ENCODE measurements at regions of chr2 and their contacts with region 1.

Region 1: DNA sequence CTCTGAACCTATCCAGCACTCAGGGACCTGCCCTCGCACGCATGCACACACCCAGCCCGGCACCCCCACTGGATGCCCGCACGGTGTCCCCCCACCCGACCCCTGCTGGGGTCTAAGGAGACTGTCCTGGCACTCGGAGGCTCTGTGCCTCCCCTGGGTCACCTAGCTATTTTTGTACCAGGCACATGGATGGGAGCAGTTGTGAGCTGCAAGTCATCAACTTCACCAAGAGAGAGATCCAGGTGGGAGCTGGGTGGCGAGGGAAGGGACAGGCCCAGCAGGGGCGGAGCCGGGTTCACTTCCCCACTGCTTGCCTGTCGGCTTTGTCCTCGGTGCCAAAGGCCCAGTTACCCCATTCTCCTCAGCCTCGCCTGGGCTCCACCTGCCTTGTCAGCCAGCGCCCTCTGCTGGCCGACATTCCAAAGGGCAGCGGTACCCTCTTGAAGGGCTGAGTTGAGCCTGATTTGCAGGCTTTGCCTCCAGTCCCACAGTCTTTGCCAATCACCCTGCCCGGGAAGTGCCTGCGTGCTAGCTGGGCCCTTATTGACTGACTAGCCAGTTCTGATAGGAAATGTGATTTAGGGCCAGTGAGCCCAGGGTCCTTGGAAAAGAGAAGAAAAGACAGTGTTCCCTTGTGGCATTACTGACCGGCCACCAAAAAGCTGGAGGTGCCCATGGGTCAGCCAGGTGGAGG is 5.8 kb downstream of the NT5DC4 start:
- DNase-seq: peak; percentile 93 to 95
- H3K4me3 ChIP-seq: peak overlapping the region; percentile 0; the same call in 1 of the 2 replicates
- H3K4me3 Mint-ChIP-seq: peak overlapping the region; percentile 58
- H3K27ac Mint-ChIP-seq: peak overlapping the region; percentile 67
- H3K4me1 ChIP-seq: peaks cover 21% of the 10 kb centered on the region
- H3K4me1 Mint-ChIP-seq: peaks cover 10% of the 10 kb centered on the region
- H3K27me3 ChIP-seq: no peaks in the 10 kb centered on the region
- H3K27me3 Mint-ChIP-seq: no peaks in the 10 kb centered on the region
- CTCF ChIP-seq: peak; percentile 96 to 97

Region 2: DNA sequence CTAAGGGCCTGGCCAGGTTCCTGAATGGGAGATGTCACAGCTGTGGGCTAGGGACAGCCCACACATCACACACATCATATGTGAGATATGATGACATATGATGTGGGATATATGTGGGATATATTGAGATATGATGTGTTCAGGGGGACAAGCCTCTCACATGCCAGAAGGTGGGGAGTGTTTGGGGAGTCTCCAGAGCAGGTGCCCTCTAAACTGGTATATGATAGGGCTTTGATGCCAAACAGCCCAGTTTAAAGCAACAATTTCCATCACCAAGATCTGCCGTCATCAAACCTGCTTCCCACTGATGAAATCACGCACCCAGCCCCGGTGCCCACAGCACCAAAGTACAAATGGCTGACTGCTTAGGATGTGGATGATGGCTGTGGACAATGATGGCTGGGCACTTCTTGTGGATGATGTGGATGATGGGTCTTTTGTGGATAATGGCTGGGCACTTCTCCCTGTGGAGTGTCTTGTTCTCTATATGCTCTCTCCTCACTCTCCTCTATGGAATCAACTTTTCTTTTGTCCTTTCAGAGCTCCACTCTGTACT is 537.6 kb before region 1 on chr2:
- CTCF ChIA-PET with region 1: no interaction called
- POLR2A ChIA-PET with region 1: no interaction called
- intact Hi-C with region 1: no loop called
- DNase-seq: no peak
- H3K4me3 ChIP-seq: no peak overlapping the region
- H3K4me3 Mint-ChIP-seq: no peak overlapping the region
- H3K27ac Mint-ChIP-seq: no peak overlapping the region
- H3K4me1 ChIP-seq: no peaks in the 10 kb centered on the region
- H3K4me1 Mint-ChIP-seq: no peaks in the 10 kb centered on the region
- H3K27me3 ChIP-seq: no peaks in the 10 kb centered on the region
- H3K27me3 Mint-ChIP-seq: peaks cover 2% of the 10 kb centered on the region
- CTCF ChIP-seq: no peak

Region 3: GRCh38 chr2:112542123-112542983 is 184.3 kb before region 1 on chr2 and contains the start of gene POLR1B:
- CTCF ChIA-PET with region 1: no interaction called
- POLR2A ChIA-PET with region 1: no interaction called
- intact Hi-C with region 1: loop called (anchors 1 kb)
- DNase-seq: peak; percentile 92 to 93
- H3K4me3 ChIP-seq: peak within 1 kb of the TSS; percentile 89
- H3K4me3 Mint-ChIP-seq: no peak within 1 kb of the TSS
- H3K27ac Mint-ChIP-seq: no peak within 1 kb of the TSS
- H3K4me1 ChIP-seq: peaks cover 10% of the 10 kb centered on the region; the same call in 1 of the 2 replicates
- H3K4me1 Mint-ChIP-seq: no peaks in the 10 kb centered on the region
- H3K27me3 ChIP-seq: no peaks in the 10 kb centered on the region
- H3K27me3 Mint-ChIP-seq: no peaks in the 10 kb centered on the region
- CTCF ChIP-seq: peak in 1 of 2 experiments; percentile 24
- total RNA-seq, gene POLR1B: 38.3 and 42.2 TPM in 2 replicates

Region 4: GRCh38 chr2:112591378-112591777 is 135.3 kb before region 1 on chr2:
- CTCF ChIA-PET with region 1: interaction called, 10 read pairs
- POLR2A ChIA-PET with region 1: interaction called, 9 read pairs
- intact Hi-C with region 1: no loop called
- DNase-seq: peak; percentile 91 to 96
- H3K4me3 ChIP-seq: no peak overlapping the region
- H3K4me3 Mint-ChIP-seq: peak overlapping the region; percentile 49
- H3K27ac Mint-ChIP-seq: peak overlapping the region; percentile 78
- H3K4me1 ChIP-seq: peaks cover 28% of the 10 kb centered on the region
- H3K4me1 Mint-ChIP-seq: peaks cover 37% of the 10 kb centered on the region
- H3K27me3 ChIP-seq: no peaks in the 10 kb centered on the region
- H3K27me3 Mint-ChIP-seq: no peaks in the 10 kb centered on the region
- CTCF ChIP-seq: no peak

Region 5: GRCh38 chr2:112618383-112618782 is 108.3 kb before region 1 on chr2:
- CTCF ChIA-PET with region 1: interaction called, 11 read pairs
- POLR2A ChIA-PET with region 1: no interaction called
- intact Hi-C with region 1: no loop called
- DNase-seq: no peak
- H3K4me3 ChIP-seq: no peak overlapping the region
- H3K4me3 Mint-ChIP-seq: no peak overlapping the region
- H3K27ac Mint-ChIP-seq: no peak overlapping the region
- H3K4me1 ChIP-seq: peaks cover 6% of the 10 kb centered on the region
- H3K4me1 Mint-ChIP-seq: peaks cover 7% of the 10 kb centered on the region
- H3K27me3 ChIP-seq: no peaks in the 10 kb centered on the region
- H3K27me3 Mint-ChIP-seq: no peaks in the 10 kb centered on the region
- CTCF ChIP-seq: no peak

Region 6: GRCh38 chr2:112645310-112646101 is 81.1 kb before region 1 on chr2 and contains the start of gene SLC20A1:
- CTCF ChIA-PET with region 1: interaction called, 26 read pairs
- POLR2A ChIA-PET with region 1: interaction called, 30 read pairs
- intact Hi-C with region 1: loop called (anchors 1 kb)
- DNase-seq: peak; percentile 96 to 100
- H3K4me3 ChIP-seq: peak within 1 kb of the TSS; percentile 93
- H3K4me3 Mint-ChIP-seq: peak within 1 kb of the TSS; percentile 83
- H3K27ac Mint-ChIP-seq: peak within 1 kb of the TSS; percentile 96
- H3K4me1 ChIP-seq: peaks cover 31% of the 10 kb centered on the region
- H3K4me1 Mint-ChIP-seq: peaks cover 39% of the 10 kb centered on the region
- H3K27me3 ChIP-seq: no peaks in the 10 kb centered on the region
- H3K27me3 Mint-ChIP-seq: no peaks in the 10 kb centered on the region
- CTCF ChIP-seq: peak; percentile 32 to 80
- total RNA-seq, gene SLC20A1: 91.1 and 102 TPM in 2 replicates

Region 7: DNA sequence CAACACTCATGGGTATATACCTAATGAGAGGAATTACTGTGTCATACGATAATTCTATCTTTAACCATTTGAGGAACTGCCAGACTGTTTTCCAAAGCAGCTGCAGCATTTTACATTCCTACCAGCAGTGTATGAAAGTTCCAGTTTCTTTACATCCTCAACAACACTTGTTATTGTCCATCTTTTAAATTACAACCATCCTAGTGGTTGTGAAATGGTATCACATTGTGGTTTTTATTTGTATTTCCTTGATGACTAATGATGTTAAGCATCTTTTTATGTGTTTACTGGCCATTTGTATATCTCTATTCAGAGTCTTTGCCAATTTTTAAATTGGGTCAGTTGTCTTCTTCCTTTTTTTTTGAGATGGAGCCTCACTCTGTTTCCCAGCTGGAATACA is 41.8 kb after region 1 on chr2:
- CTCF ChIA-PET with region 1: no interaction called
- POLR2A ChIA-PET with region 1: no interaction called
- intact Hi-C with region 1: no loop called
- DNase-seq: no peak
- H3K4me3 ChIP-seq: no peak overlapping the region
- H3K4me3 Mint-ChIP-seq: no peak overlapping the region
- H3K27ac Mint-ChIP-seq: no peak overlapping the region
- H3K4me1 ChIP-seq: 0 out of 2 replicates have a peak, but pooled peaks cover 4% of the 10 kb centered on the region
- H3K4me1 Mint-ChIP-seq: peaks cover 14% of the 10 kb centered on the region
- H3K27me3 ChIP-seq: no peaks in the 10 kb centered on the region
- H3K27me3 Mint-ChIP-seq: no peaks in the 10 kb centered on the region
- CTCF ChIP-seq: no peak

Region 8: DNA sequence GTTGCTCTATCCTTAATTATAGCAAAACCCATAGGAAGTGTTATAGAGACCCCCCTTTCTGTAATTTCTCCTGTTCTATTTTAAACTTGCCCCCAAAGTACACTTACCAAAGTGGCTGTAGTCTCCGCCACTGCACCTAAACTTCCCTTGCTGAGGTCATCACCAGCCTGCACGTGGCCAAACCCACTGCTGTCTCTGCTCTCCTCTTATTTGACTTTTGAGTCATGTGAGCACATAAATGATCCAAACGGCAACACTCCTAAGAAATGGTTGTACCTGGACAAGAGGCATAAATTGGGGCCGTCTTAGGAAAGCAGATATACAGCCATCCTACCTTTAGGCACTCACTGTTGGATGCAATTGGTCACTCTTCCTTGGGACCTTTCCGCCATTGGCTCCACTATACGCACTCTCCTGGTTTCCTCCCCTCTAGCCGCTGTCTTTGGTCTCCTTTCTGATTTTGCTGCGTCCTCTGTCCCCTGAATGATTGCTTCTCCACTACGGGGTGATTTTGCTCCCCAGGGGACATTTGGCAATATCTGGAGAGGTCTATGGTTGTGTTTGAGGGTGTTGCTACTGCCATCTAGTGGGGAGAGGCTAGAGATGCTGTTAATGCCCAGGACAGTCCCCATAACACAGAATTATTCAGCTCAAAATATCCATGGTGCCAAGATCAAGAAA is 231.9 kb after region 1 on chr2:
- CTCF ChIA-PET with region 1: interaction called, 3 read pairs
- POLR2A ChIA-PET with region 1: no interaction called
- intact Hi-C with region 1: loop called (anchors 1 kb)
- DNase-seq: peak; percentile 59 to 61
- H3K4me3 ChIP-seq: no peak overlapping the region
- H3K4me3 Mint-ChIP-seq: no peak overlapping the region
- H3K27ac Mint-ChIP-seq: no peak overlapping the region
- H3K4me1 ChIP-seq: peaks cover 5% of the 10 kb centered on the region; the same call in 1 of the 2 replicates
- H3K4me1 Mint-ChIP-seq: no peaks in the 10 kb centered on the region
- H3K27me3 ChIP-seq: no peaks in the 10 kb centered on the region
- H3K27me3 Mint-ChIP-seq: no peaks in the 10 kb centered on the region
- CTCF ChIP-seq: peak; percentile 80 to 83